Vagina (tissue), 2 donors: ENCODE measurements at regions of chr10 and their contacts with region 1.

Region 1: GRCh38 chr10:73167783-73168464 is at the starts of genes ECD and FAM149B1:
- DNase-seq: peak; percentile 95 to 97
- H3K4me3 ChIP-seq: peak within 1 kb of the TSS; percentile 82 to 95
- H3K27ac ChIP-seq: peak within 1 kb of the TSS; percentile 97
- H3K4me1 ChIP-seq: peaks cover 50% of the 10 kb centered on the region
- H3K27me3 ChIP-seq: no peaks in the 10 kb centered on the region
- CTCF ChIP-seq: no peak
- POLR2A ChIP-seq: peak in 1 of 2 donors; percentile 94
- total RNA-seq, gene ECD: 26.5 TPM
- total RNA-seq, gene FAM149B1: 25.8 TPM

Region 2: GRCh38 chr10:73358331-73359279 is 190.7 kb after region 1 on chr10 and contains the start of gene CFAP70:
- intact Hi-C with region 1: no loop called
- DNase-seq: peak in 1 of 2 donors; percentile 91
- H3K4me3 ChIP-seq: peak within 1 kb of the TSS; percentile 68 to 89
- H3K27ac ChIP-seq: no peak within 1 kb of the TSS
- H3K4me1 ChIP-seq: peaks cover 8% of the 10 kb centered on the region
- H3K27me3 ChIP-seq: no peaks in the 10 kb centered on the region
- CTCF ChIP-seq: no peak
- POLR2A ChIP-seq: no peak
- total RNA-seq, gene CFAP70: 1.5 TPM

Region 3: GRCh38 chr10:73495884-73496674 is 328.2 kb after region 1 on chr10 and contains the start of gene PPP3CB:
- intact Hi-C with region 1: loop called (anchors 10 kb)
- DNase-seq: peak in 1 of 2 donors; percentile 94
- H3K4me3 ChIP-seq: peak within 1 kb of the TSS; percentile 77 to 92
- H3K27ac ChIP-seq: peak within 1 kb of the TSS; percentile 93
- H3K4me1 ChIP-seq: peaks cover 46% of the 10 kb centered on the region
- H3K27me3 ChIP-seq: no peaks in the 10 kb centered on the region
- CTCF ChIP-seq: no peak
- POLR2A ChIP-seq: no peak
- total RNA-seq, gene PPP3CB: 46.2 TPM